ENCODE measurements at regions of chr7 and their contacts with region 1.

Region 1: GRCh38 chr7:118583641-118584040 is 359.1 kb downstream of the ANKRD7 start:
- DNase-seq: no peak
- ATAC-seq: no peak
- H3K4me3 Mint-ChIP-seq: no peak overlapping the region
- H3K27ac Mint-ChIP-seq: no peak overlapping the region
- H3K4me1 Mint-ChIP-seq: no peaks in the 10 kb centered on the region
- H3K27me3 Mint-ChIP-seq: no peaks in the 10 kb centered on the region

Region 2: DNA sequence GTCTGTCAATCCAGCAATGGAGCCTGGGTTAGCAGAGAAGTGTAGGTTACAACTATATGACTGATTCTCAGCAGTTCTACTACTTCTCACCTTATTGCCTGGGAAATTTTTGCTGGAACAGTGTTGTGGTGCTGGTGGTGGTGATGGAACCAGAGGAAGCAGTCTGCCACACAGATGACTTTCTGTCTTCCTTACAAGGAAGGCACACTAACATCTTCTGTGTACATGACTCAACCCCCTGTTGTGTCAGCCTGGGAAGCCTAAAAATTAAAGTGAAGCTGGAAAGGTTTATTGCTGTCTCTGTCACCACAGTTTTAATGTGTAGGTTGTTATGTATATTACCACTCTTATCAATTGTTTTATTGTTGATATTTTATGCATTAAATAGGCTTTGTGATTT is 318.8 kb before region 1 on chr7:
- CTCF ChIA-PET with region 1: no interaction called
- POLR2A ChIA-PET with region 1: no interaction called
- intact Hi-C with region 1: loop called in 1 of 2 experiments (anchors 10 kb)
- DNase-seq: no peak
- ATAC-seq: no peak
- H3K4me3 Mint-ChIP-seq: no peak overlapping the region
- H3K27ac Mint-ChIP-seq: no peak overlapping the region
- H3K4me1 Mint-ChIP-seq: no peaks in the 10 kb centered on the region
- H3K27me3 Mint-ChIP-seq: peaks cover 6% of the 10 kb centered on the region

Region 3: DNA sequence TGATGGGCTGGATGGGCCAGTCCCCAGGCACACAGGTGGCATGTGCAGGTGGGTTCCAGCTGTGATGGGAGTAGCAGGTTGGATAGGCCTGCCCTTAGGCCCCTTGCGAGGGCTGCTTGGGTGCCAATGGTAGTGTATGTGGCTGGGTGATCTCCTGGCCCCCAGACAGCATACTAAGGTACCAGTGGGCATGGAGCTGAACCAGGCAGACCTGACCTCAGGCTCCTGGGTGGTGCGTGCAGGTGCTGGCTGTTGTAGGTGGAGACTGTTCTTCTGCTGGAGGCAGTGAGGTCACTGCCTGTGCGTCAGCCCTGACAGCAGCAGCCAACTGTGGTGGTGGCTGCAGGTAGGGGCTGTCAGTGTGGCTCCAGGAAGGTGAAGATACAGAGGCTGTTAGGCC is 25.6 kb after region 1 on chr7:
- CTCF ChIA-PET with region 1: no interaction called
- POLR2A ChIA-PET with region 1: no interaction called
- intact Hi-C with region 1: no loop called
- DNase-seq: no peak
- ATAC-seq: no peak
- H3K4me3 Mint-ChIP-seq: no peak overlapping the region
- H3K27ac Mint-ChIP-seq: no peak overlapping the region
- H3K4me1 Mint-ChIP-seq: no peaks in the 10 kb centered on the region
- H3K27me3 Mint-ChIP-seq: no peaks in the 10 kb centered on the region